Posterior cingulate gyrus (tissue), 11 donors: ENCODE measurements at regions of chr13 and their contacts with region 1.

Region 1: GRCh38 chr13:40682449-40683240 is 16.2 kb upstream of the FOXO1 start:
- DNase-seq: no peak

Region 2: GRCh38 chr13:39684531-39685137 is 998.0 kb before region 1 on chr13:
- intact Hi-C with region 1: loop called (anchors 5 kb)
- DNase-seq: no peak

Region 3: DNA sequence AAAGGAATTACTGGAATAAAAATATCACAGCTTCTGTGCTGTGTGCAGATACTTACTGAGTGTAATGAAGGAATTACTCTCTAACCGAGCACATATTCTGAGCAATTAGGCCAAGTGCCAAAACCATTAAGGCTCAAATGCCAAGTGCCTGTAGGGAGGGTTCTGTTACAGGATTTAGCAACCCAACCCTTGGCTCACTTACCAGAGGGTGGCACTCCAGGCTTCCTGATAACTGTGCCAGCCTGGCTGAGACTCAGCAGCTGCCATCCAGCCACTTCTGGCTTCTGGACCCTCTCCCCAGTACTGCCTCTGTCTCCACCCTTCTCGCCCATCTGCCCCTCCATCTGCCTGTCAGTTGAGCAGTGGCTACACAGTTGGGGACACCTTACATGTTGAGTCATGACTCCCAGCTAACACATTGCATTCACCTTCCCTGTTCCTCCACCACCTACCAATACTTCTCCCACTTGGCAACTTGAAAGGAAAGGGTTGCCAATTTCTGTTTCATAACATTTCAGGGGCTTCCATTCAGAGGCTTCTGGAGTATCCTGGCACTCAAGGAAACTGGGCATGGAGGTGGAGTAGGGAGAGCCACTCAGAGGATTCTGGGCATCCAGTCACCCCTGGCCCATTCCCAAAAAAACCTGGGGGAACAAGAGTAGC is 916.7 kb before region 1 on chr13:
- intact Hi-C with region 1: loop called (anchors 5 kb)
- DNase-seq: peak; percentile 38 to 90 (median 58)

Region 4: GRCh38 chr13:39942552-39943273 is 739.9 kb before region 1 on chr13:
- intact Hi-C with region 1: loop called (anchors 5 kb)
- DNase-seq: peak in 8 of 10 donors; percentile 42 to 91 (median 62)

Region 5: DNA sequence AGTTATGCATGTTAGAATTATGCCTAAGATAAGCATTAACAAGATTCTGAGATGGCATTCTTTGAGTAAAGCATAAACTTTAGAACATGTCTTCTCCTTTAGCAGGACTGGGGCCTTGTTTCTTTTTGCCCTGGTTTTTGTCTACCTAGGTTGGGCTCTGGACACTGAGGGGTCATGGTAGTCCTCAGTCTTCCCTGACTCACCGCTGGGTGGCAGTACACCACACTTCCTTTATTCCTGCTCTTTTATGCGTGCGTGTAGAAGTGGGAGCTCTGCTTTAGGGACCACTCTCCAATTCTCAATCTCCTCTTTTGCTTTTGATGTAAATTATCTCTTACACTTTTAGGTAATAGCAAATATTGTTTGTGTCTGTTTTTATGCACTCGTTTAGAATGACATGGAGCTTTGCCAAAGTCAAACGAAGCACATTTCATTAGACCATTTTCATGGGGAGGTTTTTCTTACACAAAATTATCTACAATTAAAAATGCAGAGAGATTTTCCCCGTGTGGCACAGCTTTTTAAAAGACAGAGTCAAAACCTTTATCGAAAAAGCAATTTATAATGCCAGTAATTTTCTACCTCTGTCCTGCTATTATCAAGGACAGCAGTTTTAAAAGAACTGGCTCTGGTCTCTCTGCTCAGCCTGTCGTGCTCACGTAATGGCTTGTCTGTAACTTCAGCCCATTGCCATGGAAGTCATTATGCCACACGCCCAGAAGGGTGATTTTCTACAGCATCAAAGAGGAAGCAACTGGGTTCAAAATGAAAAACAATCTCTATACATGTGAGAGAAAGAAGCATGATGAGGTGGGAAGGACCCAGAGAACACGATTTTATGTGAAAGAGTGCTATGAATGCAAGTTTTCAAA is 613.2 kb before region 1 on chr13:
- intact Hi-C with region 1: loop called (anchors 2 kb)
- DNase-seq: peak; percentile 36 to 94 (median 83)

Region 6: GRCh38 chr13:41145146-41145908 is 462.7 kb after region 1 on chr13:
- intact Hi-C with region 1: no loop called
- DNase-seq: no peak